AG04450 (cell line): ENCODE measurements at regions of chr6 and their contacts with region 1.

Region 1: GRCh38 chr6:111011360-111012142 is 29.7 kb downstream of the RPF2 start:
- DNase-seq: peak; percentile 11
- H3K4me3 ChIP-seq: no peak overlapping the region
- H3K27ac ChIP-seq: no peak overlapping the region
- H3K27me3 ChIP-seq: no peaks in the 10 kb centered on the region
- CTCF ChIP-seq: peak; percentile 74

Region 2: DNA sequence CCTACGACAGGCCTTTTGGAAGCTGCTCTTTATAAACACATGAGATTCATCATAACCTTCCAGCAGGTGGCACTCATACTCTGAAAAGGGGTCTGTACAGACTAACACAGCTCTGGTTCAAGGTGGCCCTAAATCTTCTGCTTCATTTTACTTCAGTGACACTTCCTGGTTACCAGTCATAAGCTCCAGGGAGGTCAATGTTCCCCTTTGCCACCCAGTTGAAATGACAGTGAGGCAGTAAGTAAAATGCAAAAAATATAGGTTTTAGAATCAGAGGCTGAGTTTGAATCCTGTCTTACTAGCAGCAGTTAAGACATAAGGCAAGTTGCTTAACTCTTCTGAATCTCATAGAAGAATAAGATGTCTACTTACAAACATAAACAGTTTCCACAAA is 329.1 kb before region 1 on chr6:
- CTCF ChIA-PET with region 1: interaction called, 11 read pairs
- POLR2A ChIA-PET with region 1: no interaction called
- DNase-seq: peak; percentile 47
- H3K4me3 ChIP-seq: no peak overlapping the region
- H3K27ac ChIP-seq: no peak overlapping the region
- H3K27me3 ChIP-seq: no peaks in the 10 kb centered on the region
- CTCF ChIP-seq: peak; percentile 74

Region 3: DNA sequence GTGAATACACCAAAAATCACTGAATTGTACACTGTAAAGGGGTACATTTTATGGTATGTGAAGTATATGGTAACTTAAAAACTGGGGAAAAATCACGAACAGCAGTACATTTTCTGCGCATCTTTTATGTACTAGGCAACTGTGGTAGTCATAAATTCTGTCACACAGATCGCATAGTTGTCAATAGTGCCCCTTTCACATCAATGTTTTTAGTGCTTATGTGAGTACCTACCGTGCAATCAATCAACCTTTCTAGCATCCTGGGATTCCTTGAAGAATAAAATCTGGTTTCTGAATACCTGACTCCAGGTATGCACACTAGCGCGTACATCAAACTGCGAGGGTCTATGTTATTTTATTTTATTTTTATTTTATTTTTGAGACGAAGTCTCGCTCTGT is 30.4 kb before region 1 on chr6:
- CTCF ChIA-PET with region 1: interaction called, 13 read pairs
- POLR2A ChIA-PET with region 1: no interaction called
- DNase-seq: no peak
- H3K4me3 ChIP-seq: peak overlapping the region; percentile 99
- H3K27ac ChIP-seq: peak overlapping the region; percentile 82
- H3K27me3 ChIP-seq: no peaks in the 10 kb centered on the region
- CTCF ChIP-seq: no peak

Region 4: DNA sequence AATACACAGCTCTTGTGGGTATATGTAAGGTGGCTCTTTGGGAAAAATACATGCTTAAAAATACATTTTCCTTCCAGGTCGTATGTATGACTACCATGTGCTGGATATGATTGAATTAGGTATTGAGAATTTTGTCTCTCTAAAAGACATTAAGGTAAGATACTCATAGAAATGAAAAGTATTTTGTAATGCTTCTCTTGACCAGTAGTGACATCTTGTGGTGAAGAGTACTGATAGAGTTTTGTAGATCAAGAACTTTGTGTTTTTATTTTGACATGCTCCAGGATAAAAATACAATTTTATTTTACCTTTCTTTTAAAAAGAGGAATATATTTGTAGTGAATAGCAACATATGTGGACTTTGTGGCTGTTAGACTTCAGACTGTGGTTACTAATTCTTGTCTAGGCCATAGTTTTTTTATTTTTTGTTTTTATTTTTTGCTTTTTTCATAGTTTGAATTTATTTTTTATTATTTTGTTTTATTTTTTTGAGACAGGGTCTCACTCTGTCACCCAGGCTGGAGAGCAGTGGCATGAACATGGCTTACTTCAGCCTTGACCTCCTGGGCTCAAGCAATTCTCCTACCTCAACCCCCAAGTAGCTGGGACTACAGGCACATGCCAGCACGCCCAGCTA is 11.8 kb before region 1 on chr6:
- CTCF ChIA-PET with region 1: interaction called, 11 read pairs
- POLR2A ChIA-PET with region 1: no interaction called
- DNase-seq: no peak
- H3K4me3 ChIP-seq: no peak overlapping the region
- H3K27ac ChIP-seq: no peak overlapping the region
- H3K27me3 ChIP-seq: no peaks in the 10 kb centered on the region
- CTCF ChIP-seq: peak; percentile 50

Region 5: GRCh38 chr6:111210194-111210728 is 198.7 kb after region 1 on chr6:
- CTCF ChIA-PET with region 1: interaction called, 39 read pairs
- POLR2A ChIA-PET with region 1: no interaction called
- DNase-seq: peak; percentile 16
- H3K4me3 ChIP-seq: no peak overlapping the region
- H3K27ac ChIP-seq: no peak overlapping the region
- H3K27me3 ChIP-seq: no peaks in the 10 kb centered on the region
- CTCF ChIP-seq: peak; percentile 78